Naive thymus-derived CD4-positive, alpha-beta T cell (primary cell): ENCODE measurements at regions of chr19 and their contacts with region 1.

Region 1: DNA sequence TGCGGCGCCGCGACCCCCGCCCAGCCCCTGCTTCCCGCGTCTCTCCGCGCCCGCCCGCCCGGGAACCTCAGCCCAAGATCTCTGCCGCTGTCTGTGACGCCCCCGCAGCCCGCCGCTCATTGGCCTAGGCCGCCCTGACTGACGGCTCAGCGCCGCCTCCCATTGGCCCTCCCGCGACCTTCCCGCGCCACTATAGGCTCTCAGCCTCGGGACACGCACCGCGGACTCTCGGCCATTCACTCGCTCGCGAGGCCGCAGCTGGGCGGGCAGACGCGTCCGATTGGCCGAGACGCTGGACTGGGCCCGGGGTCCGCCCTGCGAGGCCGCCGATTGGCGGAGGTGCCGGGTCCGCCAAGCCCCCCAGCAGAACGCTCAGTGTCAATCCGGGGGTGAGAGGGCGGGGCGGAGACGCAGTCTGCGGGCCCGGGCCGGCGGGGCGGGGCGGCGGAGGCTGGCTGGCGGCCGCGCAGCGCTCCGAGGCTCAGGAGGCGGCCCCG is at the start of gene PRKACA:
- DNase-seq: peak; percentile 93 to 99 (median 98)
- ATAC-seq: peak; percentile 93
- H3K4me3 ChIP-seq: peak within 1 kb of the TSS; percentile 67
- H3K4me3 Mint-ChIP-seq: peak within 1 kb of the TSS; percentile 92 to 98 (median 95)
- H3K27ac ChIP-seq: peak within 1 kb of the TSS; percentile 87
- H3K27ac Mint-ChIP-seq: peak within 1 kb of the TSS; percentile 92 to 99 (median 97)
- H3K4me1 ChIP-seq: peaks cover 15 to 46% of the 10 kb centered on the region in 2 donors
- H3K4me1 Mint-ChIP-seq: peaks cover 20 to 56% (median 46%) of the 10 kb centered on the region in 7 donors
- H3K27me3 ChIP-seq: no peaks in the 10 kb centered on the region
- H3K27me3 Mint-ChIP-seq: no peaks in the 10 kb centered on the region
- total RNA-seq, gene PRKACA: 41.3 to 101 (median 63.1) TPM

Region 2: GRCh38 chr19:13938301-13939064 is 179.2 kb before region 1 on chr19 and contains the start of gene PODNL1:
- CTCF ChIA-PET with region 1: no interaction called
- POLR2A ChIA-PET with region 1: no interaction called
- intact Hi-C with region 1: no loop called
- DNase-seq: no peak
- ATAC-seq: no peak
- H3K4me3 ChIP-seq: no peak within 1 kb of the TSS
- H3K4me3 Mint-ChIP-seq: no peak within 1 kb of the TSS
- H3K27ac ChIP-seq: no peak within 1 kb of the TSS
- H3K27ac Mint-ChIP-seq: peak within 1 kb of the TSS in 2 of 9 donors; percentile 44 to 63
- H3K4me1 ChIP-seq: no peaks in the 10 kb centered on the region
- H3K4me1 Mint-ChIP-seq: peaks cover 2 to 11% (median 7%) of the 10 kb centered on the region in 7 donors
- H3K27me3 ChIP-seq: no peaks in the 10 kb centered on the region
- H3K27me3 Mint-ChIP-seq: peaks cover 0 to 13% (median 5%) of the 10 kb centered on the region in 5 donors
- total RNA-seq, gene PODNL1: 0.59 TPM in 1 of 5 experiments, not detected in the others

Region 3: GRCh38 chr19:13959962-13960862 is 157.5 kb before region 1 on chr19:
- CTCF ChIA-PET with region 1: no interaction called
- POLR2A ChIA-PET with region 1: no interaction called
- intact Hi-C with region 1: no loop called
- DNase-seq: peak in 2 of 9 donors; percentile 29 to 37
- ATAC-seq: peak; percentile 61
- H3K4me3 ChIP-seq: no peak overlapping the region
- H3K4me3 Mint-ChIP-seq: no peak overlapping the region
- H3K27ac ChIP-seq: no peak overlapping the region
- H3K27ac Mint-ChIP-seq: peak overlapping the region in 3 of 9 donors; percentile 31 to 75 (median 43)
- H3K4me1 ChIP-seq: no peaks in the 10 kb centered on the region
- H3K4me1 Mint-ChIP-seq: peaks cover 0 to 5% (median 3%) of the 10 kb centered on the region in 7 donors
- H3K27me3 ChIP-seq: no peaks in the 10 kb centered on the region
- H3K27me3 Mint-ChIP-seq: no peaks in the 10 kb centered on the region

Region 4: GRCh38 chr19:14081325-14082093 is 36.2 kb before region 1 on chr19:
- CTCF ChIA-PET with region 1: interaction called, 6 read pairs
- POLR2A ChIA-PET with region 1: interaction called, 5 read pairs
- intact Hi-C with region 1: loop called (anchors 1 to 5 kb)
- DNase-seq: peak; percentile 96 to 100 (median 99)
- ATAC-seq: peak; percentile 97
- H3K4me3 ChIP-seq: peak overlapping the region; percentile 86
- H3K4me3 Mint-ChIP-seq: peak overlapping the region; percentile 80 to 98 (median 94)
- H3K27ac ChIP-seq: peak overlapping the region; percentile 80
- H3K27ac Mint-ChIP-seq: peak overlapping the region; percentile 86 to 98 (median 95)
- H3K4me1 ChIP-seq: peaks cover 5 to 15% of the 10 kb centered on the region in 2 donors
- H3K4me1 Mint-ChIP-seq: peaks cover 0 to 27% (median 17%) of the 10 kb centered on the region in 7 donors
- H3K27me3 ChIP-seq: no peaks in the 10 kb centered on the region
- H3K27me3 Mint-ChIP-seq: no peaks in the 10 kb centered on the region

Region 5: GRCh38 chr19:14091081-14091812 is 26.5 kb before region 1 on chr19:
- CTCF ChIA-PET with region 1: interaction called, 3 read pairs
- POLR2A ChIA-PET with region 1: interaction called, 11 read pairs
- intact Hi-C with region 1: loop called (anchors 1 to 2 kb)
- DNase-seq: peak; percentile 56 to 89 (median 84)
- ATAC-seq: peak; percentile 71
- H3K4me3 ChIP-seq: peak overlapping the region; percentile 99
- H3K4me3 Mint-ChIP-seq: peak overlapping the region; percentile 81 to 100 (median 98)
- H3K27ac ChIP-seq: peak overlapping the region; percentile 89
- H3K27ac Mint-ChIP-seq: peak overlapping the region; percentile 89 to 100 (median 98)
- H3K4me1 ChIP-seq: peaks cover 8 to 10% of the 10 kb centered on the region in 2 donors
- H3K4me1 Mint-ChIP-seq: peaks cover 13 to 21% (median 18%) of the 10 kb centered on the region in 7 donors
- H3K27me3 ChIP-seq: no peaks in the 10 kb centered on the region
- H3K27me3 Mint-ChIP-seq: no peaks in the 10 kb centered on the region

Region 6: DNA sequence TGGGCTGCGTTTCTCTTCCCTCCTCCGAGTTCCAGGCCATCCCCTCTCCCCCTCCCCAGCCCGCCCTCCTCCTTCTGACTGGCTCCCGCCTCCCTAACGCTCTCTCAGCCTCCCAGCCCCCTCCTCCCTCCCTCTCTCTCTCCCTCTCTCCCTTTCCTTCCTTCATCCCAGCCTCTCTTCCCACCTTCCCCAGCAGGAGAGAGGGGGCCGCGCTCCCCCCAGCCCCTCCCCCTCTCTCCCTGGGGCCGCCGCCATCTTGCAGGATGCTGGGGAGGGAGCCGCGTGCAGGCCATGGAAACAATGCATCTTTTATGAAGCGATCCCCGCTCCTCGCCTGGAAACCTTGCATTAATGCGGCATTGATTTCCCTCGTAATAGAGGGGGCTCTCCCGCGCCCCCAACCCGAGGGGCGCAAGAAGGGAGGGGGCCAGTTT is 130.9 kb after region 1 on chr19:
- CTCF ChIA-PET with region 1: no interaction called
- POLR2A ChIA-PET with region 1: no interaction called
- intact Hi-C with region 1: loop called in 1 of 2 experiments (anchors 2 kb)
- DNase-seq: peak in 8 of 9 donors; percentile 9 to 56 (median 34)
- ATAC-seq: peak; percentile 63
- H3K4me3 ChIP-seq: peak overlapping the region; percentile 52
- H3K4me3 Mint-ChIP-seq: peak overlapping the region; percentile 36 to 82 (median 72)
- H3K27ac ChIP-seq: peak overlapping the region; percentile 63
- H3K27ac Mint-ChIP-seq: peak overlapping the region in 8 of 9 donors; percentile 46 to 78 (median 62)
- H3K4me1 ChIP-seq: no peaks in the 10 kb centered on the region
- H3K4me1 Mint-ChIP-seq: peaks cover 4 to 15% (median 13%) of the 10 kb centered on the region in 7 donors
- H3K27me3 ChIP-seq: no peaks in the 10 kb centered on the region
- H3K27me3 Mint-ChIP-seq: peaks cover 0 to 9% (median 0%) of the 10 kb centered on the region in 5 donors